Breast epithelium (tissue), 4 donors: ENCODE measurements at regions of chr11 and their contacts with region 1.

Region 1: GRCh38 chr11:104306862-104307474 is 143.0 kb upstream of the PDGFD start:
- DNase-seq: no peak
- H3K4me3 ChIP-seq: no peak overlapping the region
- H3K27ac ChIP-seq: no peak overlapping the region
- H3K4me1 ChIP-seq: no peaks in the 10 kb centered on the region
- H3K27me3 ChIP-seq: no peaks in the 10 kb centered on the region
- CTCF ChIP-seq: no peak
- POLR2A ChIP-seq: no peak

Region 2: GRCh38 chr11:103378931-103379330 is 928.0 kb before region 1 on chr11:
- intact Hi-C with region 1: loop called (anchors 5 kb)
- DNase-seq: no peak
- H3K4me3 ChIP-seq: no peak overlapping the region
- H3K27ac ChIP-seq: no peak overlapping the region
- H3K4me1 ChIP-seq: no peaks in the 10 kb centered on the region
- H3K27me3 ChIP-seq: no peaks in the 10 kb centered on the region
- CTCF ChIP-seq: no peak
- POLR2A ChIP-seq: no peak

Region 3: DNA sequence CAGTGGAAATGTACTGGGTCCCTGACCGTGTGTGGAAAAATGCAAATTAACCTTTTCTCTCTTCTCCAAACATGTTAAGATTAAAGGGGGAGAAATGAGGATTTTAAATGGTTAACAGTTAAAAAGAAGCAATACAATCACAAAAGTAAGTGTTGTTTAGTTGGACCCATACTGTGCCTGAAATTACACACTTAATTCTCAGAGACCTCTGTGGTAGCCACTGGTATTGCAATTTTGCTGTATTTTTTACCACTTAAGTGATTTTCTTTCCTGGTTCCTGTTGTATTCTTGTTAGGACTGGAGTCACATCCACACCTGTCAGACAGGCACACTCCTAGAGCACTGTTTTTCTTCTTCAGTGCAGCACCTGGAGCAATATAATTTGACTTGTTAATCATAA is 36.6 kb after region 1 on chr11:
- intact Hi-C with region 1: no loop called
- DNase-seq: no peak
- H3K4me3 ChIP-seq: no peak overlapping the region
- H3K27ac ChIP-seq: no peak overlapping the region
- H3K4me1 ChIP-seq: no peaks in the 10 kb centered on the region
- H3K27me3 ChIP-seq: no peaks in the 10 kb centered on the region
- CTCF ChIP-seq: no peak
- POLR2A ChIP-seq: no peak